ENCODE measurements at regions of chr10 and their contacts with region 1.

Region 1: GRCh38 chr10:78066012-78066411 is 32.3 kb downstream of the RPS24 start:
- DNase-seq: no peak
- H3K4me3 ChIP-seq: no peak overlapping the region
- H3K27ac ChIP-seq: no peak overlapping the region
- H3K4me1 ChIP-seq: no peaks in the 10 kb centered on the region
- H3K27me3 ChIP-seq: no peaks in the 10 kb centered on the region
- CTCF ChIP-seq: no peak
- POLR2A ChIP-seq: no peak

Region 2: DNA sequence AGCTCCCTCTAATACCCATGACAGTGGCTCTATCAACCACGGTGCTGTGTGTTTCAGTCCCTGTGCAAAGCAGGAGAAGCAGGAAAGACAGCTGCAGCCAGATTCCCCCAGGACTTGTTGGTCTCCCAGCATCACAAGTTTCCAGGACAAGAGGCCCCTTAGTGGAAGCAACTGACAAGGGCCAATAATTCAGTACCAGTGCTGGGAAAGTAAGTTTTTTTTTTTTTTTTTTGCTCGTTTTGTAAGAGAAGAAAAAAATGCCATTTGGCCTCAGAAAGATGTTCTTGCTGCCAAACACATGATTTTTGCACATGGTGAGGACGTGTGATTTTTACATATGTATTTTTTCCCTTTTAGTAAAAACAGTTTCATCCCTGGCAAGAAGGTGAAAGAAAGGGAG is 718.5 kb after region 1 on chr10:
- intact Hi-C with region 1: loop called (anchors 10 kb)
- DNase-seq: no peak
- H3K4me3 ChIP-seq: no peak overlapping the region
- H3K27ac ChIP-seq: no peak overlapping the region
- H3K4me1 ChIP-seq: no peaks in the 10 kb centered on the region
- H3K27me3 ChIP-seq: no peaks in the 10 kb centered on the region
- CTCF ChIP-seq: no peak
- POLR2A ChIP-seq: no peak

Region 3: GRCh38 chr10:79093658-79094411 is 1027.8 kb after region 1 on chr10:
- intact Hi-C with region 1: no loop called
- DNase-seq: peak; percentile 84 to 89
- H3K4me3 ChIP-seq: peak overlapping the region in 1 of 3 donors; percentile 10
- H3K27ac ChIP-seq: peak overlapping the region; percentile 93 to 98
- H3K4me1 ChIP-seq: peaks cover 11 to 35% of the 10 kb centered on the region in 2 donors
- H3K27me3 ChIP-seq: no peaks in the 10 kb centered on the region
- CTCF ChIP-seq: no peak
- POLR2A ChIP-seq: no peak